HCT116 (cell line): ENCODE measurements at regions of chr16 and their contacts with region 1.

Region 1: DNA sequence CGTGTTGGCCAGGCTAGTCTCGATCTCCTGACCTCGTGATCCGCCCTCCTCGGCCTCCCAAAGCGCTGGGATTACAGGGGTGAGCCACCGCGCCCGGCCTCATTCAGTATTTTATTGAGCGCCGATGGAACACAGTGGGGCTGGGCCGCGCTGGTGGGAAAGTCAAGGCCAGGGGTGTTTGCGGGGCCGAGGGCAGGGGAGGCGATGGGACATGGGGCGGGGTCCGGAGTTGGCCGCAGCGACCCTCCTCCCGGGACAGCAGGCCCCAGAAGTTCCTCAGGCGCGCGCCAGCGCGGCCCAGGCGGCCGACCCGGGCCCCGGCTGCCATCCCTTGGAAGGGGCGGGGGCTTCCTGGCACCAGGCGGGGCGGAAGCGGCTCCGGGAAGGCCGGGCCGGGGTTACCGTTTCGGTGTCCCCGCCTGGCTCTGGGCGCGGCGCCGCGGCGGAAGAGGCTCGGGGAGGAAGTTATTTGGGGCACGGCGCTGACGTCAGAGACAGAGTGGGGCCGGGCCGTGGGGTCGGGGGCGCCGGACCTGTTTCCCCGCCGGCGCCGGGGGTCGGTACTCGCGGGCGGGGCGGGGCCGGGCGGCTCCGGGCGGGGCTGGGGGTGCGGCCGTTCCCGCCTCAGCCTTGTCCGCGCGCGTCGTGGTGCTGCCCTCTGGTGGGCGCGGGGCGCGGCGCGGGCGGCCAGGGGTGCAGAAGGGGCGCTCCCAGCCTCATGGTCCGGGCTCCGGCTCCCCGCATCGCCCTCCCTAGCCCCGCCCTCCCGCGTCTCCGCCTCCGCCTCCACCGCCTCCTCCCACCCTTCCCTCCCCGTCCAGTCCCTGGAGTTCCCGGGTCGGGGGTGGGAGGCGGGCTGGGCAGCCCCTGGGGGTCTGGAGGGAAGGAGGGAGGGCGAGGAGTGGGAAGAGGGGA is 952 bp upstream of the PRSS27 start:
- DNase-seq: peak; percentile 62
- ATAC-seq: peak; percentile 85
- H3K4me3 ChIP-seq: peak overlapping the region; percentile 55 to 61
- H3K27ac ChIP-seq: peak overlapping the region; percentile 89
- H3K4me1 ChIP-seq: peaks cover 28 to 43% of the 10 kb centered on the region in 2 experiments
- H3K27me3 ChIP-seq: no peaks in the 10 kb centered on the region
- CTCF ChIP-seq: peak; percentile 28 to 57 (median 29); a peak in 3 of 6 replicates
- POLR2A ChIP-seq: no peak
- RAD21 ChIP-seq: no peak

Region 2: DNA sequence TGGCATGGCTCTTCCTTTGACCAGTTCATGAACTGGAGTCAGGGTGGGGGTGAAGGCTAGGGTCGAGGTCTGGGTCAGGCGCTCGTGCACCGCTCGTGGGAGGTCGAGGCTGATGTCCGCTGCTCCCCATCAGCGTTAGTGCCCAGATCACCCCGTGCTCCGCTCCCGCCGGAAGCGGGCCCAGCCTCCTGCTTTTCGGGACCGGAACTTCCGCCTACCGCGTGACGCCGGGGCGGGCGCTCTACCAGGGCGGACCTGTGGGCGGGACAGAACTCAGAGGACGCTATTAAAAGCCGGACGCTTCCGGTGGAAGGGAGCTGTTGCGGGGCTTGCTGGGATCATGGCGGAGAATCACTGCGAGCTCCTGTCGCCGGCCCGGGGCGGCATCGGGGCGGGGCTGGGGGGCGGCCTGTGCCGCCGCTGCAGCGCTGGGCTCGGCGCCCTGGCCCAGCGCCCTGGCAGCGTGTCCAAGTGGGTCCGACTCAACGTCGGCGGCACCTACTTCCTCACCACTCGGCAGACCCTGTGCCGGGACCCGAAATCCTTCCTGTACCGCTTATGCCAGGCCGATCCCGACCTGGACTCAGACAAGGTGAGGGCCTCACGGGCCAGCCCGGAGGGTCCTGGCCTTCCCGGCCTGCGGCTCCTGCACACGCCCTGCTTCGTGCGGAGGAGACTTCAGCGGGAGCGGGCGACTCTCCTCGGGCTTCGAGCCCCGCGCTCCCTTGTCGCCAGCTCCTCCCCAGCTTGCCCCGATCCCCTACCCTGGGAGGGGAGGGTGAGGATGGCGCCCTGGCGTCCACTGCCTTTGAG is 38.6 kb before region 1 on chr16 and contains the start of gene KCTD5:
- CTCF ChIA-PET with region 1: no interaction called
- POLR2A ChIA-PET with region 1: interaction called, 3 read pairs
- RAD21 ChIA-PET with region 1: no interaction called
- intact Hi-C with region 1: loop called (anchors 2 kb)
- DNase-seq: peak; percentile 93
- ATAC-seq: peak; percentile 87
- H3K4me3 ChIP-seq: peak within 1 kb of the TSS; percentile 83 to 99
- H3K27ac ChIP-seq: peak within 1 kb of the TSS; percentile 86
- H3K4me1 ChIP-seq: peaks cover 8 to 35% of the 10 kb centered on the region in 2 experiments
- H3K27me3 ChIP-seq: no peaks in the 10 kb centered on the region
- CTCF ChIP-seq: no peak
- POLR2A ChIP-seq: peak; percentile 92
- RAD21 ChIP-seq: no peak
- total RNA-seq, gene KCTD5: 42.1 TPM